ENCODE measurements at regions of chr1 and their contacts with region 1.

Region 1: DNA sequence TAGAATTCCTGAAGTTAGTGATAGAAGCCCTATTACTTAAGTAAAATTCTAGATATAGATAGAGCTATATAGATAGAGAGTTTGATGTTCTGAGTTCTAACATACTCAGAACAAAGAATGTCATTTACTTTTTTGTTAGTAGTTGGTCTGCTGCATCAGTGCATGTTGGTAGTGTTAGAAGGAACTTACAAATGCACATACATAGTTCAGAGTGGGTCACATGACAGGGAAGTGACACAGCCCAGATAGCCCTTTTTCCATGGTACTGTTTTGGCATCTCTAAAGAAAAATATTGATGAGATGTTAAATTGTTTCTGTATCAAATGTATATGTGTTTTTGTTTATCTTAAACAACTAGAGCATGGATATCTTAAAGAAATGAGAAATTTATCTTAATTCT is 45.7 kb downstream of the DHX9 start:
- DNase-seq: no peak
- H3K4me3 Mint-ChIP-seq: no peak overlapping the region
- H3K27ac Mint-ChIP-seq: no peak overlapping the region
- H3K4me1 Mint-ChIP-seq: peaks cover 24% of the 10 kb centered on the region
- H3K27me3 Mint-ChIP-seq: no peaks in the 10 kb centered on the region

Region 2: DNA sequence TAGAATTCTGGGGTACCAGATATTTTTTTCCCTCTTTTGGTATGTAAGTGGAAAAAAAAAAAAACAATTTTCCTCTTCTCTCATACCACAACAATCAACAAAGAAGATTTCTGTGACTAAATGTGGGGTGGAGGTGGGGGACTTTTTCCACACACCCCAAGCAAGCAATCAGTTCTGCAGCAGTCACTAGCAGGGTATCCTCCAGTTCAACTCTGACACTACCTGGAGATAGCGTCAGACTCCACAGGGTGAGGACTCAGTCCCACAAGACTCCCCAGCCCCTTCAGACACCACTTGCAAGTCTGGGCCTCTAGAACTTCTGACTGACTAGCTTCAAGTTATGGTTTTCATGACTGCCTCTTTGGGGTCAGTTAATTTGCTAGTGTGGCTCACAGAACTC is 39.5 kb before region 1 on chr1:
- intact Hi-C with region 1: loop called (anchors 5 kb)
- DNase-seq: no peak
- H3K4me3 Mint-ChIP-seq: peak overlapping the region; percentile 62
- H3K27ac Mint-ChIP-seq: peak overlapping the region; percentile 86
- H3K4me1 Mint-ChIP-seq: peaks cover 71% of the 10 kb centered on the region
- H3K27me3 Mint-ChIP-seq: no peaks in the 10 kb centered on the region

Region 3: GRCh38 chr1:182869241-182869666 is 15.6 kb before region 1 on chr1:
- intact Hi-C with region 1: loop called (anchors 2 kb)
- DNase-seq: peak; percentile 64
- H3K4me3 Mint-ChIP-seq: no peak overlapping the region
- H3K27ac Mint-ChIP-seq: peak overlapping the region; percentile 34
- H3K4me1 Mint-ChIP-seq: peaks cover 17% of the 10 kb centered on the region
- H3K27me3 Mint-ChIP-seq: no peaks in the 10 kb centered on the region

Region 4: GRCh38 chr1:183124259-183124658 is 239.4 kb after region 1 on chr1:
- intact Hi-C with region 1: no loop called
- DNase-seq: no peak
- H3K4me3 Mint-ChIP-seq: no peak overlapping the region
- H3K27ac Mint-ChIP-seq: no peak overlapping the region
- H3K4me1 Mint-ChIP-seq: no peaks in the 10 kb centered on the region
- H3K27me3 Mint-ChIP-seq: peaks cover 6% of the 10 kb centered on the region

Region 5: DNA sequence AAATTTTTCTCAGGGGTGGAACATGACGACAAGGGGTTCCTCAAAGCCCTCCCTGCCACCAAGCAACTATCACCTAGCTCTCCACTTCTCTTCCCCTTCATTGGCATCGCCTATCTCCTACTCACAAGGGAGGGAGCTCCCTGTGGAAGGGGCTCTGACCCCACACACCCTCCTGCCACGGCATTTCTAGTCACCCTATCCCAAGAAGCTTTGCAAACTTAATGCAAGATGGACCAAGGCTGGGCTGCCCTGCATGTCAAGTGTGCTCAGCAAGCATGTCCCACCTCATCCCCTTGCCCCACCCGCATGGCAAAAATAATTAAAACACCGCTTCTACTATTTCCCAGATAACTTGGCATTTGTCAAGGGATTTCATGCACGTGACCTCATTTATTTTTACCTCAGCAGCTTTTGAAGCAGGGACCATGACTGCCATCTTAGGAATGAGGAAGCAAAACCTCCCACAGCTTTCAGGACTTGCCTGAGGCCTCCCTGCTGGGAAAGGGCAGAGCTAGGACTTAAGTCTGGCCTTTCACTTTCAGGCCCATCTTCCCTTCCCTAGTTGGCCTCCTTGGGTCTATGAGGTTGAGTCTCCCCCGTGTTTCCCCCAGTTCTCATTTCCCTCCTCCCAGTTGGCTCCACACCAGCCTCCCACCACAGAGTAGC is 1327.9 kb after region 1 on chr1:
- intact Hi-C with region 1: no loop called
- DNase-seq: no peak
- H3K4me3 Mint-ChIP-seq: no peak overlapping the region
- H3K27ac Mint-ChIP-seq: no peak overlapping the region
- H3K4me1 Mint-ChIP-seq: no peaks in the 10 kb centered on the region
- H3K27me3 Mint-ChIP-seq: peaks cover 15% of the 10 kb centered on the region